Caco-2 (cell line): ENCODE measurements at regions of chr1 and their contacts with region 1.

Region 1: GRCh38 chr1:203273206-203273868 is 32.0 kb upstream of the BTG2 start:
- DNase-seq: peak; percentile 84 to 92
- H3K4me3 ChIP-seq: no peak overlapping the region
- H3K4me3 Mint-ChIP-seq: no peak overlapping the region
- H3K27ac Mint-ChIP-seq: no peak overlapping the region
- H3K4me1 ChIP-seq: peaks cover 17% of the 10 kb centered on the region
- H3K4me1 Mint-ChIP-seq: peaks cover 4% of the 10 kb centered on the region
- H3K27me3 ChIP-seq: no peaks in the 10 kb centered on the region
- H3K27me3 Mint-ChIP-seq: no peaks in the 10 kb centered on the region
- CTCF ChIP-seq: peak; percentile 95 to 97

Region 2: GRCh38 chr1:203197625-203198024 is 75.7 kb before region 1 on chr1:
- CTCF ChIA-PET with region 1: no interaction called
- POLR2A ChIA-PET with region 1: no interaction called
- intact Hi-C with region 1: no loop called
- DNase-seq: no peak
- H3K4me3 ChIP-seq: no peak overlapping the region
- H3K4me3 Mint-ChIP-seq: no peak overlapping the region
- H3K27ac Mint-ChIP-seq: peak overlapping the region; percentile 82
- H3K4me1 ChIP-seq: peaks cover 49% of the 10 kb centered on the region
- H3K4me1 Mint-ChIP-seq: peaks cover 39% of the 10 kb centered on the region
- H3K27me3 ChIP-seq: no peaks in the 10 kb centered on the region
- H3K27me3 Mint-ChIP-seq: no peaks in the 10 kb centered on the region
- CTCF ChIP-seq: no peak

Region 3: GRCh38 chr1:203290261-203291089 is 17.1 kb after region 1 on chr1:
- CTCF ChIA-PET with region 1: interaction called, 19 read pairs
- POLR2A ChIA-PET with region 1: interaction called, 12 read pairs
- intact Hi-C with region 1: loop called (anchors 1 kb)
- DNase-seq: peak; percentile 96 to 97
- H3K4me3 ChIP-seq: peak overlapping the region; percentile 32
- H3K4me3 Mint-ChIP-seq: peak overlapping the region; percentile 70
- H3K27ac Mint-ChIP-seq: peak overlapping the region; percentile 94
- H3K4me1 ChIP-seq: peaks cover 41% of the 10 kb centered on the region
- H3K4me1 Mint-ChIP-seq: peaks cover 30% of the 10 kb centered on the region
- H3K27me3 ChIP-seq: no peaks in the 10 kb centered on the region
- H3K27me3 Mint-ChIP-seq: no peaks in the 10 kb centered on the region
- CTCF ChIP-seq: no peak

Region 4: DNA sequence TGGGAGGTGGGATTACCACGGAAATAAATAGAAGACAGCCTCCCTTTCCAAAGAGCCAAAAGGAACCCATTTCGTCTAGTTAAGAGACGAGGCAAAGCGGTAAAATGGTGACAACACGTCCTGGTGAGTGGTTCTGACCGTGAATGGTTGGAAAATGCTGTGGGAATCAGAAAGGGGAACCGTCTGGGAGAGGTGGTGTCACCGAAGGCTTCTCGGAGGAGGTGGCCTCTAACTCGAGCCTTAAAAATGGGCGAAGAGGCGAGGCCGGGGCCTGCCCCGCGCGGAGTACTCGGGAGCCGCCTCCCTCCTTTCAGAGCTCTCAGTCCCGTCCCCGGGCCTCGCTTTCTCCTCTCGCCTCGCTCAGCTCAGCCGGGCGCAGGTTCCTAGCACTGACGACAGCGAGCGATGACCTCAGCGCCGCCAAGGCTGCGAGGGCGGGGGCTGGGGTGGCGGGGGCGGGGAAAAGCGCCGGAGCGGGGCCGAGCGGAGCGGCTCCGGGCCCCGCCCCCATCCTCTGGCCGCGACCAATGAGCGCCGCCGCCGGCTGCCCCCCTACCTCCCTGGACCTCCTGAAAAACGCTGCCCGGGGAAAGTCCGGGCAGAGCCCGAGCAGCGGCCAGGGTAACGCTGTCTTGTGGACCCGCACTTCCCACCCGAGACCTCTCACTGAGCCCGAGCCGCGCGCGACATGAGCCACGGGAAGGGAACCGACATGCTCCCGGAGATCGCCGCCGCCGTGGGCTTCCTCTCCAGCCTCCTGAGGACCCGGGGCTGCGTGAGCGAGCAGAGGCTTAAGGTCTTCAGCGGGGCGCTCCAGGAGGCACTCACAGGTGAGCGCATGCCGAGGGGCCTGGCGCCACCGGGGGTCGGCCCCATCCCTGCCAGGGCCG is 31.8 kb after region 1 on chr1 and contains the start of gene BTG2:
- CTCF ChIA-PET with region 1: interaction called, 8 read pairs
- POLR2A ChIA-PET with region 1: interaction called, 4 read pairs
- intact Hi-C with region 1: loop called (anchors 1 kb)
- DNase-seq: peak; percentile 90 to 91
- H3K4me3 ChIP-seq: peak within 1 kb of the TSS; percentile 70
- H3K4me3 Mint-ChIP-seq: peak within 1 kb of the TSS; percentile 65
- H3K27ac Mint-ChIP-seq: peak within 1 kb of the TSS; percentile 83
- H3K4me1 ChIP-seq: peaks cover 25% of the 10 kb centered on the region
- H3K4me1 Mint-ChIP-seq: peaks cover 27% of the 10 kb centered on the region
- H3K27me3 ChIP-seq: no peaks in the 10 kb centered on the region
- H3K27me3 Mint-ChIP-seq: no peaks in the 10 kb centered on the region
- CTCF ChIP-seq: no peak
- total RNA-seq, gene BTG2: 21.2 and 21.6 TPM in 2 replicates

Region 5: DNA sequence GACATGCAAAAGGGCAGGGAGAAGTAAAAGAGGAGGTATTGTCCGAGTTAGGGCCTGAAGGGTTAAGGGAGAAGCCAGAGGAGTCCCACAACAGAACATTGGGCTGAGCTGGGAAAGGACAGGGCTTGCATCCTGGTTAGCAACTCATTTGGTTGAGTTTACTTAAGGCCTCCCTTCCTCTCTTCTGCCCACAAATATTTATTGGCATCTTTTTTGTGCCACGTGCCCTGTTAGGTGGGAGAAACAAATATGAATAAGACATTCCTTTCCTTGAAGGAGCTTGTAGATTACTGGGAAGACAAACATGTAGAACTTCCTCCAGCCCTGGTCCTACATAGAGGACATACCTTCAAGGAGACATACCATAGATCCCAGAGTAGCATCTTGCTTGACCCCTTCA is 149.3 kb after region 1 on chr1:
- CTCF ChIA-PET with region 1: no interaction called
- POLR2A ChIA-PET with region 1: no interaction called
- intact Hi-C with region 1: no loop called
- DNase-seq: no peak
- H3K4me3 ChIP-seq: no peak overlapping the region
- H3K4me3 Mint-ChIP-seq: no peak overlapping the region
- H3K27ac Mint-ChIP-seq: no peak overlapping the region
- H3K4me1 ChIP-seq: peaks cover 21% of the 10 kb centered on the region
- H3K4me1 Mint-ChIP-seq: peaks cover 24% of the 10 kb centered on the region
- H3K27me3 ChIP-seq: no peaks in the 10 kb centered on the region
- H3K27me3 Mint-ChIP-seq: no peaks in the 10 kb centered on the region
- CTCF ChIP-seq: no peak

Region 6: DNA sequence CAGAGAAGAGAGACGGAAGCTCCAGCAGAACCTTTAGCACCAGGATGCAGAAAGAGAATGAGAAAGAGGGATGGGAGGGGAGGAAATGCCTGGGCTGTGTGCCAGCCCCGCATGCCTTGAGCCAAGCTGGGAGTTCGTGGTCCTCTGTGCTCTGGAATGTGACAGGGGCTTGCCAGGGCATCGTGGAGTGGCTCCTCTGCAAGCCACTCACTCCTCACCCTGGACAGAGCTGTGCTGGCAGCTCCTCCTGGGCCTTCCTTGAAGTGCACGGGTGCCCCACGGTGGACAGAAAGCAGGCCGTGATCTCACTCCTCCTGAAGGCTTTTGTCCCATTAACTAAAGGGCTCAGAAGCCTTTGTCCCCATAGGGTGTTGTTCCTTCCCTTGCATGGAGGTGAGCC is 167.4 kb after region 1 on chr1:
- CTCF ChIA-PET with region 1: interaction called, 8 read pairs
- POLR2A ChIA-PET with region 1: no interaction called
- intact Hi-C with region 1: loop called (anchors 2 kb)
- DNase-seq: peak; percentile 60
- H3K4me3 ChIP-seq: no peak overlapping the region
- H3K4me3 Mint-ChIP-seq: no peak overlapping the region
- H3K27ac Mint-ChIP-seq: no peak overlapping the region
- H3K4me1 ChIP-seq: 0 out of 2 replicates have a peak, but pooled peaks cover 3% of the 10 kb centered on the region
- H3K4me1 Mint-ChIP-seq: peaks cover 7% of the 10 kb centered on the region
- H3K27me3 ChIP-seq: no peaks in the 10 kb centered on the region
- H3K27me3 Mint-ChIP-seq: peaks cover 2% of the 10 kb centered on the region
- CTCF ChIP-seq: peak; percentile 29 to 67

Region 7: GRCh38 chr1:203486618-203487370 is 213.5 kb after region 1 on chr1:
- CTCF ChIA-PET with region 1: no interaction called
- POLR2A ChIA-PET with region 1: no interaction called
- intact Hi-C with region 1: loop called (anchors 5 kb)
- DNase-seq: no peak
- H3K4me3 ChIP-seq: no peak overlapping the region
- H3K4me3 Mint-ChIP-seq: peak overlapping the region; percentile 58
- H3K27ac Mint-ChIP-seq: no peak overlapping the region
- H3K4me1 ChIP-seq: no peaks in the 10 kb centered on the region
- H3K4me1 Mint-ChIP-seq: no peaks in the 10 kb centered on the region
- H3K27me3 ChIP-seq: no peaks in the 10 kb centered on the region
- H3K27me3 Mint-ChIP-seq: peaks cover 9% of the 10 kb centered on the region
- CTCF ChIP-seq: no peak